Common myeloid progenitor, CD34-positive (primary cell): ENCODE measurements at regions of chr12 and their contacts with region 1.

Region 1: DNA sequence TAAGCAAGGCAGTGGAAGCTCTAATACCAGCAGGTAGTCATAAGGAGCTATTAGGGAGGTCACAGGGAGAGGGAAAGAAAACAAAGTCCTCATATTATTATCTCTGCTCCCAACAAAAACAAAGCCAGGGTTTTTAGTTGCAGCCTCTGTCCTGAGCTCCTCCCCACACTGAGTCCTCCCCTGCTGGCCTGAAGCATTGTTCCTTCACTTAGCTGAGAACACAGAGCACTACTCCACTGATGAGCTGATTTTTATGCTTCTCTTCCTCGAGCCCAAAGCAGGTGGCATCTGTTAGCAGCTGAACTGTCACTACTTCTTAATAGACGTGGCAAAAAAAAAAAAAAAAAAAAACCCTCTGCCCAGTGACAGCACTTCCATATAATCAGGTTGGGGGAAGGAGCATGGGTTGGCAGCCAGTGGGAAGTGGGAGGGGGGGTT is 10.5 kb upstream of the STAC3 start:
- DNase-seq: no peak
- H3K4me3 ChIP-seq: no peak overlapping the region
- H3K27ac ChIP-seq: no peak overlapping the region
- H3K4me1 ChIP-seq: peaks cover 0 to 3% (median 0%) of the 10 kb centered on the region in 4 experiments
- H3K27me3 ChIP-seq: no peaks in the 10 kb centered on the region

Region 2: GRCh38 chr12:56941299-56942017 is 320.0 kb before region 1 on chr12:
- CTCF ChIA-PET with region 1: no interaction called
- POLR2A ChIA-PET with region 1: no interaction called
- DNase-seq: peak in 2 of 3 donors; percentile 70 to 86
- H3K4me3 ChIP-seq: no peak overlapping the region
- H3K27ac ChIP-seq: no peak overlapping the region
- H3K4me1 ChIP-seq: peaks cover 0 to 14% (median 13%) of the 10 kb centered on the region in 4 experiments
- H3K27me3 ChIP-seq: no peaks in the 10 kb centered on the region

Region 3: GRCh38 chr12:57248934-57249742 is 12.3 kb before region 1 on chr12:
- CTCF ChIA-PET with region 1: interaction called, 21 read pairs
- POLR2A ChIA-PET with region 1: no interaction called
- DNase-seq: peak in 2 of 3 donors; percentile 62 to 67
- H3K4me3 ChIP-seq: peak overlapping the region in 3 of 7 experiments; percentile 22 to 44 (median 30)
- H3K27ac ChIP-seq: no peak overlapping the region
- H3K4me1 ChIP-seq: peaks cover 0 to 11% (median 7%) of the 10 kb centered on the region in 4 experiments
- H3K27me3 ChIP-seq: peaks cover 0 to 9% (median 3%) of the 10 kb centered on the region in 5 experiments

Region 4: GRCh38 chr12:57272337-57273151 is 11.1 kb after region 1 on chr12:
- CTCF ChIA-PET with region 1: interaction called, 17 read pairs
- POLR2A ChIA-PET with region 1: no interaction called
- DNase-seq: no peak
- H3K4me3 ChIP-seq: no peak overlapping the region
- H3K27ac ChIP-seq: no peak overlapping the region
- H3K4me1 ChIP-seq: peaks cover 0 to 12% (median 6%) of the 10 kb centered on the region in 4 experiments
- H3K27me3 ChIP-seq: no peaks in the 10 kb centered on the region

Region 5: DNA sequence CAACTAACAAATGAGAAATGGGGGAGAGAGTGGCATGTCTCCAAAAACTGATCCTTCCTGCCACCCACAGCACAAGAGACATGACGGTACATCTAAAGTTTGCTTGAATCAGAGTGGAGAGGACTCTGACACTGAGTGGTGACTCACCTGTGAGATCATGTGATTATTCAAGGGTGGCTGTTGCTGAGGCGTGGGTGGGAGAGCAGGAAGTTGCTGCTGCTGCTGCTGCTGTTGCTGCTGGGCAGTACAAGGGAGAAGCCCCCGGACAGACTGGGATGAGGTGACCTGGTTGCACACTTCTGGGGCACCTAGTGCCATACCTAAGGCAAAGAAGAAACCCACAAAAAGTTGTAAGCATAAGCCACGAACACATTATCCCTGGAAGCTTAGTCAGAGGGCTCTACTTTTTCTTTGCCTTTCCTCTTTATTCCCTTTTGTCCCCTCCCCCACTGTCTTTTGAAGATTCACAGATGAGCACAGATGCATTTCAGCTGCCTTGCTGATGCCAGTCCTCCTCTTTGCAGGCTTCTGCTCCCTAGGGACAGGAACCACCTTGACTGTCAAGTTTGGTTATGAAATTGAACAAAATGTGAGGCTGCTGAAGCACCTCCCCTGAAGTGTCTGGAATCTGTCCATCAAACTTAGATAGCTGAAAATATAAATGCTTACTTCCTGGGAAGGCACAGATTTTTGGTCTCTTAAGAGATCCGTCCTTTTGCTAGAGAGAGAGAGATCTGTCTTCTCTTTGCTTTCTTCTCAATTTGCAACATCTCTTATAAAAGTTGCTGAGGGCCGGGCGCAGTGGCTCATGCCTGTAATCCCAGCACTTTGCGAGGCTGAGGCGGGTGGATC is 19.0 kb after region 1 on chr12:
- CTCF ChIA-PET with region 1: interaction called, 17 read pairs
- POLR2A ChIA-PET with region 1: no interaction called
- DNase-seq: peak; percentile 26 to 77 (median 68)
- H3K4me3 ChIP-seq: no peak overlapping the region
- H3K27ac ChIP-seq: peak overlapping the region in 1 of 2 experiments; percentile 49
- H3K4me1 ChIP-seq: peaks cover 0 to 9% (median 6%) of the 10 kb centered on the region in 4 experiments
- H3K27me3 ChIP-seq: no peaks in the 10 kb centered on the region

Region 6: DNA sequence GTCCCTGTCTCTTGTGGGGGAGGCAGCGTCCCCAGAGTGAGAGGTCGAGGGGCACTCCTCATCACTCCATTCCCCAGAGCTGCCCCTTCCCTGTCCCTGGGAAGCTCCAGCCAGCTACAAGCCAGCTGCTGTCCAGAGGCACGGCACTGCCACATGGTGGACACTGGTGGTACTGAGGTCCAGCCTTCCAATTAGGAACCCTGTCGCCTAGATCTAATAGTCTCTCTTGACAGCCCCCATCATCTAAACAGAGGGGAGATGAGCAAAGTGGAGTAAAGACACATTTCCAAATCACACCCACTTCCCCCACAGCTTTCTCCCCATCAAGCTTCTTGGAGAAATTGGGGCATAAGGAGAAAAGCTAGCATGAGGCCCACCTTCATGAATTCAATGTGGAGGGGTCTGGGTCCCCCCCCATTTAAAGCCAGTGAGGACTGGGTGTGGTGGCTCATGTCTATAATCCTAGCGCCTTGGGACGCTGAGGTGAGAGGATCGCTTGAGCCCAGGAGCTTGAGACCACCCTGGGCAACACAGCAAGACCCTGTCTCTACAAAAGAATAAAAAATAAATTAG is 191.6 kb after region 1 on chr12:
- CTCF ChIA-PET with region 1: interaction called, 12 read pairs
- POLR2A ChIA-PET with region 1: no interaction called
- DNase-seq: peak; percentile 50 to 73 (median 57)
- H3K4me3 ChIP-seq: no peak overlapping the region
- H3K27ac ChIP-seq: no peak overlapping the region
- H3K4me1 ChIP-seq: peaks cover 0 to 18% (median 6%) of the 10 kb centered on the region in 4 experiments
- H3K27me3 ChIP-seq: no peaks in the 10 kb centered on the region